WTC11 (cell line): ENCODE measurements at regions of chr17 and their contacts with region 1.

Region 1: GRCh38 chr17:47889734-47890529 is 6.1 kb upstream of the SP2 start:
- DNase-seq: peak; percentile 96
- ATAC-seq: peak; percentile 96
- H3K4me3 Mint-ChIP-seq: no peak overlapping the region
- H3K27ac Mint-ChIP-seq: no peak overlapping the region
- H3K4me1 Mint-ChIP-seq: peaks cover 27% of the 10 kb centered on the region
- H3K27me3 Mint-ChIP-seq: no peaks in the 10 kb centered on the region; the same call in 1 of the 2 replicates
- CTCF ChIP-seq: peak; percentile 94

Region 2: GRCh38 chr17:47862621-47863440 is 27.1 kb before region 1 on chr17:
- CTCF ChIA-PET with region 1: interaction called, 12 read pairs
- POLR2A ChIA-PET with region 1: no interaction called
- DNase-seq: no peak
- ATAC-seq: no peak
- H3K4me3 Mint-ChIP-seq: no peak overlapping the region
- H3K27ac Mint-ChIP-seq: no peak overlapping the region
- H3K4me1 Mint-ChIP-seq: peaks cover 12% of the 10 kb centered on the region
- H3K27me3 Mint-ChIP-seq: peaks cover 53% of the 10 kb centered on the region
- CTCF ChIP-seq: no peak

Region 3: DNA sequence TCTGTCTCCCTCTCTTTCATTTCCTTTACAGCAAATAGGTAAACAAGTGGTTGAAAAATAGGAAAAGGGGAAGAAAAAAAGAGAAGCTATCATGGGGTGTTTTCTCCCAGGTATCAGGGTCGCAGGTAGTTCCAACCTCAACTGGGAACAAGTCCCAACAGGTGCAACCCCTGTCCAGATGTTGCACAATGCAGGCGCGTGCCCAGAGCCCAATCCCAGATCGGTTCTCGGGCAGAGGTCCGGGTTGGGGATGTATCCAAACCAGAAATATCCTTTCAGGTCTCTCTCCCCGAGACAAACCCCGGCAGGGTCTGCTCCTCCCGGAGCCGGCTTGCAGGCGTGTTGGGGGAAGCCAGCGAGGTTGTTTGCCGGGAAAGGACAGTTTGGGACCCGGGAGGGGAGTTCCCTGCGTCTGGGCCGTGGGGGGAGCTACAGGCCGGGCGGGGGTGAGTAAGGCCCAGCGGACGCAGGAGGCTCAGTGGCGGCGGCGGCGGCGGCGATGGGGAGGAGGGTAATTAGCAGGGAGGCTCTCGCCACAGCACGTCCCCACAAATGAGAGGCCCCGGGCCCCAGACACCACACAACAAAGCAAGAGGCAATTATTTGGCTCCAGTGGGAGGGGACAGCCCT is 17.8 kb before region 1 on chr17:
- CTCF ChIA-PET with region 1: interaction called, 29 read pairs
- POLR2A ChIA-PET with region 1: interaction called, 6 read pairs
- DNase-seq: peak; percentile 64
- ATAC-seq: peak; percentile 57
- H3K4me3 Mint-ChIP-seq: peak overlapping the region; percentile 70
- H3K27ac Mint-ChIP-seq: no peak overlapping the region
- H3K4me1 Mint-ChIP-seq: peaks cover 56% of the 10 kb centered on the region
- H3K27me3 Mint-ChIP-seq: peaks cover 75% of the 10 kb centered on the region
- CTCF ChIP-seq: no peak

Region 4: DNA sequence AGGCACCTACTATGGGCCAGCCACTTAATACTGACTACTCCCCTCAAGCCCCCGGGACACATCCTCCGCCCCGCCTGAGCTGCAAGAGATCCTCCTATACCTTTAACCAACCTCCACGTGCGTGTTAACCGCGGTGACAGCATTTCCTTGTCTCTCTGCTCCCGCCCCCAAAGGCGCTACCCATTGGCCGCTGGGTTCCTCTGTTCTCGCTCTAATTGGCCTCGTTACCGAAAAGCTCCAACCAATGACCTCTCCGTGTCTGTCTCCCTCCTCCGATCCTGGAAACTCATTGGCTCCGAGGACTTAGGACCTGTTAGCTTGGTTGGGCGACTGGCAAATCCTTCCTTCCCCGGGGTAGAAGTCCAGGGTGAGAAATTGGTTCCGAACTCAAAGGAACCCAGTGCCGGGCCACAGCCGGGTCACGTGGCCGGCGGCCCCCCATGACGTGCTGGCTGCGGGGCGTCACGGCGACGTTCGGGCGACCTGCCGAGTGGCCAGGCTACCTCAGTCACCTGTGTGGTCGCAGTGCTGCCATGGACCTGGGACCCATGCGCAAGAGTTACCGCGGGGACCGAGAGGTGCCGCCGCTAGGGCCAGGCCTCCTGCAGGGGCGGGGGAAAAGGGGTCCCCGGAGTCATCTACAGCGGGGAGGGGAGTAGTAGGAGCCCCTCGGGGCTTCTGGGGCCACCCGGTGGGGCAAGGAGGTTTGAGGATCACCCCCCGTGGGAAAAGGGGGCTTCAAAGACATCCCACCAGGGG is 51.5 kb after region 1 on chr17 and contains the start of gene PNPO:
- CTCF ChIA-PET with region 1: interaction called, 27 read pairs
- POLR2A ChIA-PET with region 1: no interaction called
- DNase-seq: peak; percentile 90
- ATAC-seq: peak; percentile 99
- H3K4me3 Mint-ChIP-seq: peak within 1 kb of the TSS; percentile 80
- H3K27ac Mint-ChIP-seq: no peak within 1 kb of the TSS
- H3K4me1 Mint-ChIP-seq: peaks cover 14% of the 10 kb centered on the region
- H3K27me3 Mint-ChIP-seq: peaks cover 30% of the 10 kb centered on the region
- CTCF ChIP-seq: no peak
- total RNA-seq, gene PNPO: 12.2 to 17.8 TPM (median 17.2 TPM) in 3 replicates